Heart right ventricle (tissue), 16 donors: ENCODE measurements at regions of chr6 and their contacts with region 1.

Region 1: GRCh38 chr6:164148788-164149187 is 734.3 kb downstream of the QKI start:
- DNase-seq: peak in 1 of 2 donors; percentile 16
- ATAC-seq: peak; percentile 54 to 95 (median 87)
- H3K4me3 ChIP-seq: no peak overlapping the region
- H3K27ac ChIP-seq: peak overlapping the region in 7 of 10 donors; percentile 17 to 82 (median 65)
- H3K4me1 ChIP-seq: peaks cover 0 to 30% (median 8%) of the 10 kb centered on the region in 9 donors
- H3K27me3 ChIP-seq: no peaks in the 10 kb centered on the region
- CTCF ChIP-seq: no peak

Region 2: GRCh38 chr6:164296411-164296810 is 147.6 kb after region 1 on chr6:
- intact Hi-C with region 1: loop called in 1 of 10 experiments (anchors 10 kb)
- DNase-seq: no peak
- ATAC-seq: no peak
- H3K4me3 ChIP-seq: no peak overlapping the region
- H3K27ac ChIP-seq: no peak overlapping the region
- H3K4me1 ChIP-seq: no peaks in the 10 kb centered on the region
- H3K27me3 ChIP-seq: no peaks in the 10 kb centered on the region
- CTCF ChIP-seq: no peak